ENCODE measurements at regions of chr1 and their contacts with region 1.

Region 1: DNA sequence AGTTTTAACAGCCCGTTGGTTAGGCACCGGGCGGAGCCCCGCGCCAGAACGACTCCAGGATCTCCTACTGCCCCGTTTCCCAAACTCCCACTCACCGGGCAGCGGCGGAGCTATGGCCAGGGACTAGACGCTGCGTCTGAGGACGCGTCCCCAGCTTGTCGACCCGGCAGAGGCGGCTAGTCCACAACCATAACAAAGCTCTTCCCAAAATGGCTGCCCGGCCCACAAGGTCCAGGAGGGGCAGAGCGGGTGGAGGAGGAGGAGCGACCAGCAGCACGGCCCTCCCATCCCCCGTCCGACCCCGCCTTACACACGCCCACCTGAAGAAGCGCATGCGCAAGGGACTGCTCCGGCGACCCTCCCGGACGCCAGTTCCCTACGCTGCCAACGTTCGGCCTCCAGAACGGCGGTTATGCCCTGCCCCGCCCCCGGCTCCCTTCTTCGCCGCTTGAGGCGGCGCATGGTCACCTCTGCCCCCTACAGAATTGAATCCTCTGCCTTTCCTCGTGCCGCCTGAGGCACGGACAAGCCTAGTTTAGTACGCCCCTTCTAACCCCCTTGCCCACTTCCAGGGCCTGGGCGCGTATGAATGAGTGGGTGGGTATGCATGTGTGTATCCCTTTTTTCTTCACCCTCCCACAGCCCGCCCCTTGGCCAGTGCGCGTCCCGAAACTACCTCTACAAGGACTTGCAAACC is at the start of gene GPBP1L1:
- DNase-seq: peak; percentile 94 to 98 (median 97)
- ATAC-seq: peak; percentile 85
- H3K4me3 ChIP-seq: peak within 1 kb of the TSS; percentile 86
- H3K4me3 Mint-ChIP-seq: peak within 1 kb of the TSS; percentile 95 to 100 (median 99)
- H3K27ac ChIP-seq: peak within 1 kb of the TSS; percentile 94
- H3K27ac Mint-ChIP-seq: peak within 1 kb of the TSS; percentile 99 to 100 (median 100)
- H3K4me1 ChIP-seq: peaks cover 29 to 35% of the 10 kb centered on the region in 2 donors
- H3K4me1 Mint-ChIP-seq: peaks cover 21 to 66% (median 50%) of the 10 kb centered on the region in 7 donors
- H3K27me3 ChIP-seq: no peaks in the 10 kb centered on the region
- H3K27me3 Mint-ChIP-seq: no peaks in the 10 kb centered on the region
- total RNA-seq, gene GPBP1L1: 110 to 180 (median 122) TPM

Region 2: DNA sequence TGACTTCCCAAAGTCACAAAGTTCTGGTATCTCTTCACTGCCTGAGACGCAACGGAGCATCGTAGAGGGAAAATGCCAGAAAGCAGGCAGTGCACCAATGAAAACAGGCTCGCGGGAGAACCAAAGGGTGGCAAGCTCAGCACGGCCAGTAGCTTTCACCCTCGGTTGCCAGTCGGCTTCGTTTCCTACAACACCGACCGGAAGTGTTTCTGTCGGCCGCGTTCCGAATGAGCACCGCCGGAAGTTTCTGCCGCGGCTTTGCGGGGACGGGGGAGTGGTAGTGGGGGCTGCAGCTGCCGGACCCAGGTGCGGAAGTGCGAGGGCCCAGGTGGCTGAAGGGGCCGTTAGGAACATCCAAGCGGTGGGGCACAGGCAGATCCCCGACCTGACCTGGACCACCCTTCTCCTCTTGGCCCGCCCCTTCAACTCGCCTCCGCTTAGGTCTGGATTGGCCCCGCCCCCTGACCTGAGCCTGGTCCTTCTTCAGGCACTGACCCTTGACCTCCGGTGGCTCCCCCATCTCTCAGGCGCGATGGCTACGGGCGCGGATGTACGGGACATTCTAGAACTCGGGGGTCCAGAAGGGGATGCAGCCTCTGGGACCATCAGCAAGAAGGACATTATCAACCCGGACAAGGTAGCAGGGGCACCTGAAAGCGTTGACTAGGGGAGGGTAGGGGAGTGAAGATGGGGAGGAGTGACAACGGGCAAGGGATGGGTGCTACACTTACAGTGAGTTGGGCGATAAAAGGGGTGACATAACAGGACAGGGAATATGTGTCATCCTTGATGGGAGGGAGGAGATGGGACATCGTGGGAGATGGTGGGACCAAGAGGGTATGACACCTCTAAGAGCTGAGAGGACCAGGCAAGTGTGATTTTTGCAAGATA is 1473.0 kb before region 1 on chr1 and contains the start of gene DMAP1:
- CTCF ChIA-PET with region 1: no interaction called
- POLR2A ChIA-PET with region 1: interaction called, 5 read pairs
- intact Hi-C with region 1: loop called (anchors 5 kb)
- DNase-seq: peak; percentile 75 to 89 (median 83)
- ATAC-seq: peak; percentile 93
- H3K4me3 ChIP-seq: peak within 1 kb of the TSS; percentile 93
- H3K4me3 Mint-ChIP-seq: peak within 1 kb of the TSS; percentile 85 to 97 (median 94)
- H3K27ac ChIP-seq: peak within 1 kb of the TSS; percentile 78
- H3K27ac Mint-ChIP-seq: peak within 1 kb of the TSS; percentile 86 to 97 (median 95)
- H3K4me1 ChIP-seq: peaks cover 9 to 17% of the 10 kb centered on the region in 2 donors
- H3K4me1 Mint-ChIP-seq: peaks cover 18 to 61% (median 49%) of the 10 kb centered on the region in 7 donors
- H3K27me3 ChIP-seq: no peaks in the 10 kb centered on the region
- H3K27me3 Mint-ChIP-seq: peaks cover 0 to 4% (median 0%) of the 10 kb centered on the region in 5 donors
- total RNA-seq, gene DMAP1: 46.3 to 96.2 (median 66.7) TPM

Region 3: GRCh38 chr1:44775078-44775929 is 911.2 kb before region 1 on chr1 and contains the start of gene RPS8:
- CTCF ChIA-PET with region 1: no interaction called
- POLR2A ChIA-PET with region 1: interaction called, 4 read pairs
- intact Hi-C with region 1: loop called in 1 of 2 experiments (anchors 10 kb)
- DNase-seq: peak; percentile 77 to 92 (median 90)
- ATAC-seq: peak; percentile 91
- H3K4me3 ChIP-seq: peak within 1 kb of the TSS; percentile 99
- H3K4me3 Mint-ChIP-seq: peak within 1 kb of the TSS; percentile 88 to 99 (median 92)
- H3K27ac ChIP-seq: peak within 1 kb of the TSS; percentile 89
- H3K27ac Mint-ChIP-seq: peak within 1 kb of the TSS; percentile 91 to 98 (median 94)
- H3K4me1 ChIP-seq: peaks cover 6 to 19% of the 10 kb centered on the region in 2 donors
- H3K4me1 Mint-ChIP-seq: peaks cover 20 to 45% (median 38%) of the 10 kb centered on the region in 7 donors
- H3K27me3 ChIP-seq: no peaks in the 10 kb centered on the region
- H3K27me3 Mint-ChIP-seq: no peaks in the 10 kb centered on the region
- total RNA-seq, gene RPS8: 2,000 to 3,409 (median 3,025) TPM

Region 4: GRCh38 chr1:45339789-45340570 is 346.5 kb before region 1 on chr1 and contains the starts of genes MUTYH and TOE1:
- CTCF ChIA-PET with region 1: no interaction called
- POLR2A ChIA-PET with region 1: interaction called, 22 read pairs
- intact Hi-C with region 1: loop called (anchors 1 kb)
- DNase-seq: peak; percentile 84 to 95 (median 89)
- ATAC-seq: peak; percentile 91
- H3K4me3 ChIP-seq: peak within 1 kb of the TSS; percentile 83
- H3K4me3 Mint-ChIP-seq: peak within 1 kb of the TSS; percentile 95 to 100 (median 99)
- H3K27ac ChIP-seq: peak within 1 kb of the TSS; percentile 99
- H3K27ac Mint-ChIP-seq: peak within 1 kb of the TSS; percentile 96 to 99 (median 99)
- H3K4me1 ChIP-seq: peaks cover 31 to 33% of the 10 kb centered on the region in 2 donors
- H3K4me1 Mint-ChIP-seq: peaks cover 24 to 75% (median 61%) of the 10 kb centered on the region in 7 donors
- H3K27me3 ChIP-seq: no peaks in the 10 kb centered on the region
- H3K27me3 Mint-ChIP-seq: no peaks in the 10 kb centered on the region
- total RNA-seq, gene MUTYH: 56.7 to 85.4 (median 67.7) TPM
- total RNA-seq, gene TOE1: 20.6 to 53.3 (median 25.7) TPM

Region 5: GRCh38 chr1:45643978-45644377 is 42.5 kb before region 1 on chr1:
- CTCF ChIA-PET with region 1: interaction called, 3 read pairs
- POLR2A ChIA-PET with region 1: interaction called, 10 read pairs
- intact Hi-C with region 1: no loop called
- DNase-seq: no peak
- ATAC-seq: no peak
- H3K4me3 ChIP-seq: no peak overlapping the region
- H3K4me3 Mint-ChIP-seq: no peak overlapping the region
- H3K27ac ChIP-seq: no peak overlapping the region
- H3K27ac Mint-ChIP-seq: peak overlapping the region in 4 of 9 donors; percentile 14 to 75 (median 38)
- H3K4me1 ChIP-seq: no peaks in the 10 kb centered on the region
- H3K4me1 Mint-ChIP-seq: peaks cover 0 to 25% (median 20%) of the 10 kb centered on the region in 7 donors
- H3K27me3 ChIP-seq: no peaks in the 10 kb centered on the region
- H3K27me3 Mint-ChIP-seq: no peaks in the 10 kb centered on the region

Region 6: GRCh38 chr1:45843474-45843905 is 157.0 kb after region 1 on chr1:
- CTCF ChIA-PET with region 1: no interaction called
- POLR2A ChIA-PET with region 1: no interaction called
- intact Hi-C with region 1: loop called in 1 of 2 experiments (anchors 1 kb)
- DNase-seq: peak in 1 of 9 donors; percentile 2
- ATAC-seq: no peak
- H3K4me3 ChIP-seq: no peak overlapping the region
- H3K4me3 Mint-ChIP-seq: peak overlapping the region in 1 of 10 donors; percentile 60
- H3K27ac ChIP-seq: no peak overlapping the region
- H3K27ac Mint-ChIP-seq: peak overlapping the region in 1 of 9 donors; percentile 72
- H3K4me1 ChIP-seq: no peaks in the 10 kb centered on the region
- H3K4me1 Mint-ChIP-seq: peaks cover 0 to 14% (median 5%) of the 10 kb centered on the region in 7 donors
- H3K27me3 ChIP-seq: no peaks in the 10 kb centered on the region
- H3K27me3 Mint-ChIP-seq: no peaks in the 10 kb centered on the region

Region 7: DNA sequence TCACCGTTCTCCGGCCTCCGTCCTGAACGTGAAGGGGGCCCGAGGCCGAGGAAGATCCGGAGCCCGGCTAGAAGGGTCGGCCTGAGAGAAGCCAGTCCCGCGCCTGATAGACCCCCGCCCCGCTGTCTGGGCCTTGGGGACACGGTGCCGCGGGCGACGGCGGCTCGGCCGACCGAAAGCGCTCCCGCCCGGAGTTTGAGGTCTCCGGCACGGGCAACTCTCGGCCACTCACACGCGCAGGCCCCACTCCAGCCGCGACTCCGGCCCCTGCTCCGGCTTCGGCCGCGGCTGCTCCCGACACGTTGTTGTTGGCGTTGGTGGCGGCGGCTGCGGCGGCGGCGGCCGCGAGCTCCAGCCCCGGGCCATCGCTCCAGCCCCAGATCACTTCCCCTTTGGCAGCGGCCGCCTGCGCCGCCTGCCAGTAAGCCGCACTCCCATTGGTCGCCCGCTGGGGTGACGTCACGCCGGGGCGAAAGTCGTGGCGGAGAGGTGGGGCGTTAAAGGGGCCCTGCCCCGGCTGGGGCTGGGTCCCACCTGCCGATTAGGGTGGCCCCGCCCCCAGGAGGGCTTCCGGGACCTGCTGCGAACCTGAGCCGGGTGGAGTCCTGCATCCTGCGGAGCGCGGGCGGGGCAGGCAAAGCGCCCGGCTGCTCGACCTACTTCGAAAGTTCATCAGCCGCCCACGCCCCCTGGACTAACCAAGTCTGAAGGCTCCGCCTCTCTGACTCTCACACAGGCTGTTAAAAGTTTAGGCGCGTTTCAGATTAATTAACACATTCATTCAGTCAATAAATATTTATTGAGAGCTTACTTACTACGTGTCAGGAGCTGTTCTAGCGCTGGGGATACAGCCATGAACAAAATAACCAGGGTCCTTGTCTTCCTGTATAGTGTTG is 1032.5 kb after region 1 on chr1 and contains the start of gene EFCAB14:
- CTCF ChIA-PET with region 1: no interaction called
- POLR2A ChIA-PET with region 1: no interaction called
- intact Hi-C with region 1: loop called in 1 of 2 experiments (anchors 2 kb)
- DNase-seq: peak; percentile 98 to 100 (median 100)
- ATAC-seq: peak; percentile 99
- H3K4me3 ChIP-seq: peak within 1 kb of the TSS; percentile 78
- H3K4me3 Mint-ChIP-seq: peak within 1 kb of the TSS; percentile 86 to 96 (median 91)
- H3K27ac ChIP-seq: peak within 1 kb of the TSS; percentile 91
- H3K27ac Mint-ChIP-seq: peak within 1 kb of the TSS; percentile 80 to 96 (median 93)
- H3K4me1 ChIP-seq: peaks cover 20 to 28% of the 10 kb centered on the region in 2 donors
- H3K4me1 Mint-ChIP-seq: peaks cover 38 to 52% (median 43%) of the 10 kb centered on the region in 7 donors
- H3K27me3 ChIP-seq: no peaks in the 10 kb centered on the region
- H3K27me3 Mint-ChIP-seq: no peaks in the 10 kb centered on the region
- total RNA-seq, gene EFCAB14: 64.5 to 98.2 (median 89.5) TPM

Measured in naive thymus-derived CD4-positive, alpha-beta T cell (primary cell).